Activated B cell treated with CpG ODN at 0.5 μM for 24 hours (primary cell): ENCODE measurements at regions of chr15 and their contacts with region 1.

Region 1: GRCh38 chr15:40893733-40894688 is at the start of gene VPS18:
- DNase-seq: peak; percentile 99
- ATAC-seq: peak; percentile 98
- H3K4me3 Mint-ChIP-seq: peak within 1 kb of the TSS; percentile 98
- H3K27ac Mint-ChIP-seq: peak within 1 kb of the TSS; percentile 90
- H3K4me1 Mint-ChIP-seq: peaks cover 34% of the 10 kb centered on the region
- H3K27me3 Mint-ChIP-seq: no peaks in the 10 kb centered on the region
- CTCF ChIP-seq: peak; percentile 94
- total RNA-seq, gene VPS18: 25.3 and 26.2 TPM in 2 replicates

Region 2: GRCh38 chr15:40684381-40684780 is 209.6 kb before region 1 on chr15:
- CTCF ChIA-PET with region 1: interaction called, 4 read pairs
- POLR2A ChIA-PET with region 1: no interaction called
- intact Hi-C with region 1: loop called (anchors 1 kb)
- DNase-seq: no peak
- ATAC-seq: no peak
- H3K4me3 Mint-ChIP-seq: no peak overlapping the region
- H3K27ac Mint-ChIP-seq: no peak overlapping the region
- H3K4me1 Mint-ChIP-seq: peaks cover 15% of the 10 kb centered on the region
- H3K27me3 Mint-ChIP-seq: no peaks in the 10 kb centered on the region
- CTCF ChIP-seq: no peak

Region 3: GRCh38 chr15:40754883-40755811 is 138.9 kb before region 1 on chr15 and contains the start of gene RMDN3:
- CTCF ChIA-PET with region 1: no interaction called
- POLR2A ChIA-PET with region 1: no interaction called
- intact Hi-C with region 1: loop called (anchors 1 kb)
- DNase-seq: peak; percentile 93
- ATAC-seq: peak; percentile 97
- H3K4me3 Mint-ChIP-seq: peak within 1 kb of the TSS; percentile 90
- H3K27ac Mint-ChIP-seq: peak within 1 kb of the TSS; percentile 91
- H3K4me1 Mint-ChIP-seq: peaks cover 25% of the 10 kb centered on the region
- H3K27me3 Mint-ChIP-seq: no peaks in the 10 kb centered on the region
- CTCF ChIP-seq: no peak
- total RNA-seq, gene RMDN3: 25.5 and 25.6 TPM in 2 replicates

Region 4: GRCh38 chr15:40857601-40858341 is 36.2 kb before region 1 on chr15:
- CTCF ChIA-PET with region 1: interaction called, 203 read pairs
- POLR2A ChIA-PET with region 1: interaction called, 28 read pairs
- intact Hi-C with region 1: loop called (anchors 1 kb)
- DNase-seq: peak; percentile 80
- ATAC-seq: peak; percentile 98
- H3K4me3 Mint-ChIP-seq: no peak overlapping the region
- H3K27ac Mint-ChIP-seq: no peak overlapping the region
- H3K4me1 Mint-ChIP-seq: peaks cover 8% of the 10 kb centered on the region
- H3K27me3 Mint-ChIP-seq: no peaks in the 10 kb centered on the region
- CTCF ChIP-seq: no peak

Region 5: DNA sequence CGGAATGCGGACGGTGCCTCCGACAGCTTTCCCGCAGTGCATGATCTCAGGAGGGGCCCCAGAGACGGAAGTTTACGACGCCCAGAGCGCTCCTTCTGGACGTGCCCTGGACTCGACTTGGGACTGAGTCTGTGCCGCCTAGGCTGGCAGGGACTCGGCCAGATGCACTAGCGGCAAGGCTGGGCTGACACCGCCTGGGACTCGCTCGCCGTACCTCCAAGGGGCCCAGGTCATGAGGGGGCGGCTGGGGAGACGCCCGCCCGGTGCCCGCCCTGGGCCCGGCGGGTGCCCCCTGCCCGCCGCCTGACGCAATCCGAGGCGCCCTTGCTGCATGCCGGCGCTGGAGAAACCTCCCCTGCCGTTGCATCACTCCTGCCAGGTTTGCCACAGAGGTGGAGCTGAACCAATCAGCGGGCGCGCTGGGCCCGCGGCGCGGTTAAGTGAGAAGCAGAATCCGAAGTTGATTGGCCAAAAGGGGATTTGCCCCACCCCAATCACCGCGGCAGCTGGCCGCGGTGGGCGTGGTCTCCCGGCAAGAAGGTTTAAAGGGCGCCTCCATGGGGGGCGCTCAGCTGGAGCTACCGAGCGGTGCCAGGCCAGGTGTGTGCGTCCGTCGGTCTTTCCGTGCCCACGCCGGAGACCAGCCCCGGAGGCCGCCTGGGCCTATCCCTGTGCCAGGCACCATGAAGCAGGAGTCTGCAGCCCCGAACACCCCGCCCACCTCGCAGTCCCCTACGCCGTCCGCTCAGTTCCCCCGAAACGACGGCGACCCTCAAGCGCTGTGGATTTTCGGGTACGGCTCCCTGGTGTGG is 59.1 kb after region 1 on chr15 and contains the start of gene CHAC1:
- CTCF ChIA-PET with region 1: no interaction called
- POLR2A ChIA-PET with region 1: interaction called, 19 read pairs
- intact Hi-C with region 1: no loop called
- DNase-seq: peak; percentile 88
- ATAC-seq: peak; percentile 94
- H3K4me3 Mint-ChIP-seq: peak within 1 kb of the TSS; percentile 93
- H3K27ac Mint-ChIP-seq: peak within 1 kb of the TSS; percentile 92
- H3K4me1 Mint-ChIP-seq: peaks cover 23% of the 10 kb centered on the region
- H3K27me3 Mint-ChIP-seq: peaks cover 7% of the 10 kb centered on the region
- CTCF ChIP-seq: no peak
- total RNA-seq, gene CHAC1: 22.3 and 27.3 TPM in 2 replicates

Region 6: GRCh38 chr15:41207687-41208448 is 313.9 kb after region 1 on chr15:
- CTCF ChIA-PET with region 1: no interaction called
- POLR2A ChIA-PET with region 1: interaction called, 15 read pairs
- intact Hi-C with region 1: no loop called
- DNase-seq: no peak
- ATAC-seq: no peak
- H3K4me3 Mint-ChIP-seq: no peak overlapping the region
- H3K27ac Mint-ChIP-seq: no peak overlapping the region
- H3K4me1 Mint-ChIP-seq: no peaks in the 10 kb centered on the region
- H3K27me3 Mint-ChIP-seq: peaks cover 2% of the 10 kb centered on the region
- CTCF ChIP-seq: no peak